A549 (cell line): ENCODE measurements at regions of chr20 and their contacts with region 1.

Region 1: GRCh38 chr20:10040070-10040975 is 5.5 kb downstream of the ANKEF1 start:
- DNase-seq: peak; percentile 56 to 60
- ATAC-seq: peak; percentile 64 to 84; a peak in 4 of 6 replicates
- H3K4me3 ChIP-seq: no peak overlapping the region
- H3K27ac ChIP-seq: peak overlapping the region; percentile 3 to 56; a peak in 3 of 6 replicates
- H3K4me1 ChIP-seq: peaks cover 27% of the 10 kb centered on the region
- CTCF ChIP-seq: no peak
- EP300 ChIP-seq: no peak
- POLR2A ChIP-seq: no peak
- RAD21 ChIP-seq: no peak

Region 2: DNA sequence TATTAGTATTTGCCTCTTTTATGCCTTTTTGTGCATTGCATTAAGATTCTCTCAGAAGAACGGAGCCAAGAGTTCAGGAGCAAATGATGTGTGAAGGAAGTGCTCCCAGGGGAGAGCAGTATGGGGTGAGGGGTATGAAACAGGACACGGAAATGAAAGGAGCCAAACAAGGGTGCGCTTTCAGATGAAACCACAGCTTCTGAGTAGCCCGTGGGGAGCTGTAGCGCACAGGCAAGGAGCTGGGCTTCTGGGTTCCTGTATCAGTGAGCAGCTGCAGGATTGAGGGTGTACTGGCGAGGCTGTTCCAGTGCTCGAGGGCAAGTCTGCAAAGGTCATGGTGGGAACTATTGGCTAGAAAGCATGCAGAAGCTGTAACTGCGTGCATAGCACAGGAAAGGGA is 19.9 kb after region 1 on chr20:
- CTCF ChIA-PET with region 1: interaction called, 10 read pairs
- POLR2A ChIA-PET with region 1: no interaction called
- DNase-seq: no peak
- ATAC-seq: no peak
- H3K4me3 ChIP-seq: no peak overlapping the region
- H3K27ac ChIP-seq: no peak overlapping the region
- H3K4me1 ChIP-seq: no peaks in the 10 kb centered on the region
- CTCF ChIP-seq: no peak
- EP300 ChIP-seq: no peak
- POLR2A ChIP-seq: no peak
- RAD21 ChIP-seq: no peak